ENCODE measurements at regions of chr14 and their contacts with region 1.

Region 1: DNA sequence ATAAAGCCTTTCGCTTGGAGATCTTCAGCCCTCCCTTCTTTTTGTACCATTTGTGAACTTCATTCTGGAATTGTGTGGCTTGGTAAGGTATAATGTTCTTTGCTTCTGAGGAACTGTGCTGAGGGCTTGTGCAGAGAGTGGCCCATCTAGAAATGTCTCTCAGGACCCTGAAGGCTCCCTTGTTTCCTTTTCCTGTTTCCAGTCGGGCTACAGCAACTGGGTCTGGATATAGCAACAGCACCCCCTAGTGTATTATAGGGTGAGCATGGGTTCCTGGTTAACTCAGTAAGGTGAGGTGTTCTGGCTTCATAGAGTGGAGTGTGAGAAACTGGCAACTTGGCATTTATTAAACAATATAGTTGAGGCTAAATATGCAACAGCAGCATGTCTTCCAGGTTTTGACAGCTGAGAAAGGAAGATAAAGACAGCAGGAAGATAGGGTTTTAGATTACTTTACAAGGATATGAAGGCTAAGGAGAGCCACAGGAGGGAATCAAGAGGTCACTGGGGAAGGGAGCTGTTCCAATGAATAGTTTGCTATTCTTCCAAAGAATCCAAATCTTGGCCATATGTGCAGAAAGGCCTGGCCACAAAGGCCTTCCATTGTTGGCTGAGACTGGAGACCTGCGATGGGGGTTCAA is 49.1 kb upstream of the RNU6-8 start:
- DNase-seq: peak; percentile 65
- CTCF ChIP-seq: peak; percentile 74

Region 2: GRCh38 chr14:31926123-31926522 is 326.0 kb before region 1 on chr14:
- in situ Hi-C with region 1: loop called (anchors 10 kb)
- DNase-seq: peak; percentile 52
- CTCF ChIP-seq: peak; percentile 33

Region 3: DNA sequence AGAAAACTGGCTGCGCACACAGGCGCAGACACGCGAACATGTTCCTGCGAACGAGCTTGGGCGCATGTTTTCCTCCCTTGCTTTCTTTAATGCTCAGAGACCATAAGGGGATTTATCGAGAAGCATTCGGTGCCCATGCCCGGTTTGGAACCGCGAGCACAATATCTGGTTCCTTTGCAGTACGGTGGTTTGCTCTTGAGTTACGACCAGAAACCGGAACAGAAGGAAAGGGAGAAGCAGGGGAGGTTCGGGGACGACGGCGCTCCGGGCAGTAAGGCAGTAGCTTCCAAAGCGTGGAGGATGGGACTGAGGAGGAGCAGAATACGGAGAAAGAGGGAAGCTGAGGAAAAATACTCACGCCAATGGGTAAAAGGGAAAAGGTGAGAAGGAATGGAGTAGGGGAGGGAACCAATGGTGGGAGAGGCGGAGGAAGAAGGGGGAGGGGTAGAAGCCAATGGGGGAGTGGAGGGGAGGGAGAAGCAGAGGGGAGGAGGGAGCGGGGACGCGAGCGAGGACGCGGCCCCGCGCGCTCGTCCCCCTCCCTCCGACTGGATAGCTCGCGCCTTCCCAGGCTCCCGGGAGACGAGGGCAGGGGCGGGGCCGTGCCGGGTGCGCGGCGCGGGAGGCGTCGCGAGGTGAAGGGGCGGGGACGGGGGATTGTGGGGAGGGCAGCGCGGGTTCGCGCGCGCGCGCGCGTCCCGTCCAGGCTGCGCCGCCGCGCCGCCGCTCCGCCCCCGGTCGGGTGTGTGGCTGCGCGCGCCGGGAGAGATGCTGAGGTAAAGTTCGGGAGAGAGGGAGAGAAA is 175.7 kb before region 1 on chr14:
- in situ Hi-C with region 1: loop called (anchors 10 kb)
- DNase-seq: peak; percentile 82
- CTCF ChIP-seq: no peak

Region 4: DNA sequence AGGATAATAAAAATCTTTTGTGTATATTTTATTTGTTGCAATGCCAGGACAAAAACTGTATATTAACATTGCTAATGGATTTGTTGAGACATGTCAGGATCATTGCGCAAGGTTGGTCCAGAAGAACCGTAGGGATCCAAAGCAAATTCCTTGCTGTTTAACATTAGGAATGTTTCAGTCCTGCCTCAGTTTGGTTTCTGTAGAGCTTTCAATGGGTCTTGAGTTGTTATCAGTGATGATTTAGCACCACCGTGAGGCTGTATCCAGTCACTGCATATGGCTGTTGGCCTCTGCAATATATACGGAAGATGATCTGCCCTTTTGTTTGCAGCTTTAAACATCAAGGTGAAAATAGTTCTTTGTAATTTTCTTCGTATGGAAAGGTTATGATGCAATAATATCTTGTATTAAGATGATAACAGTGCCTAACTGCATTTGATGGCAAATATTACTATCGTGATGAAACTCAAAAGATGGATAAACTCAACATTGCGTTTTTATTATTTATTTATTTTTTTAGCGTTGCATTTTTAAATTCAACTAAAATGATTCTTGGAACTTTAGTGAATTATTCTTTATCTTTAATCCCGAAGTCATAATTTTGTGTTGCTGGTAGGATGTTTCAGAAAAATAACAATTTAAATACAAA is 308.2 kb after region 1 on chr14:
- in situ Hi-C with region 1: loop called (anchors 10 kb)
- DNase-seq: peak; percentile 45
- CTCF ChIP-seq: peak; percentile 83

Measured in GM13976 (cell line).